ENCODE measurements at regions of chr11 and their contacts with region 1.

Region 1: DNA sequence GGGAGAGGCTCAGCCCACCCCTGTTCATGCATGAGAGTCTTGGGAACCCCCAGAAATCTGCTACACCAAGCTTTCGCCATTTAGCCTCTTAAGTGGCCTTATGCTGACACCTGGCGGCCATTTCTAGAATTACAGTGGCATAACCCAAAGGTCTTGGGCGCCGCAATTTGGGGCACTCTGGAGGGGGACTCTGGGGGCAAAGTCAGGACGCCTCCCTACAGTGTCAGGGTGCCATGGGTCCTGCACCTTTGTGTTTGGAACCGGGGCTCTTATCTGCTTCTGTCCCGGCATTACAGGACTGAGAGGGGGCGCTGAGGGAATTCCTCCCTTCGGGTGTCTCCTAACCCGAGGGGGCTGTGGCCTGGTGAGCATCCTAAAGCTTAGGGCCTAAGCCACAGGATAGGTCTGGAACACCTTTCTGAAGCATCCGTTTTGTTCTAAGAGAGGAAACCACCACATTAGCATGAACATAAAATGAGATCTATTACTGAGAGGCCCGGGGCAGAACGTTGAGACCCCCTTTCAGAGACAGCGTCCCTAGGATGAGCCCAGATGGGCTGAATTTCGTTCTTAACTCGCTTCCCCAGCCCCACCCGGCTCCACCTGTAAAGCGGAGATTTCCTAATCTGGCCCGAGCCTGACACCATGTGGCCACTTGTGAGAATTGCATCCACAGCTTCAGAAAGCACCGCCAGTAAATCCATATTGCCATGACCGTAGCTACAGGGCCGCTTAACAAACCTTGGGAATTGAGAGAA is 9.3 kb downstream of the INS start:
- DNase-seq: peak; percentile 54 to 67
- H3K4me3 ChIP-seq: no peak overlapping the region
- H3K27ac ChIP-seq: no peak overlapping the region
- H3K4me1 ChIP-seq: no peaks in the 10 kb centered on the region
- H3K27me3 ChIP-seq: no peaks in the 10 kb centered on the region
- CTCF ChIP-seq: peak; percentile 81

Region 2: GRCh38 chr11:1548221-1549070 is 603.2 kb before region 1 on chr11:
- CTCF ChIA-PET with region 1: no interaction called
- POLR2A ChIA-PET with region 1: no interaction called
- intact Hi-C with region 1: no loop called
- DNase-seq: peak; percentile 68 to 74
- H3K4me3 ChIP-seq: peak overlapping the region; percentile 38; the same call in 1 of the 2 replicates
- H3K27ac ChIP-seq: no peak overlapping the region
- H3K4me1 ChIP-seq: no peaks in the 10 kb centered on the region; the same call in none of the 2 replicates
- H3K27me3 ChIP-seq: peaks cover 8% of the 10 kb centered on the region; the same call in 1 of the 2 replicates
- CTCF ChIP-seq: no peak

Region 3: GRCh38 chr11:1652771-1653540 is 498.7 kb before region 1 on chr11:
- CTCF ChIA-PET with region 1: interaction called, 21 read pairs
- POLR2A ChIA-PET with region 1: no interaction called
- intact Hi-C with region 1: loop called (anchors 1 kb)
- DNase-seq: peak in 1 of 2 experiments; percentile 61
- H3K4me3 ChIP-seq: no peak overlapping the region
- H3K27ac ChIP-seq: no peak overlapping the region
- H3K4me1 ChIP-seq: no peaks in the 10 kb centered on the region
- H3K27me3 ChIP-seq: peaks cover 39% of the 10 kb centered on the region
- CTCF ChIP-seq: peak; percentile 92

Region 4: DNA sequence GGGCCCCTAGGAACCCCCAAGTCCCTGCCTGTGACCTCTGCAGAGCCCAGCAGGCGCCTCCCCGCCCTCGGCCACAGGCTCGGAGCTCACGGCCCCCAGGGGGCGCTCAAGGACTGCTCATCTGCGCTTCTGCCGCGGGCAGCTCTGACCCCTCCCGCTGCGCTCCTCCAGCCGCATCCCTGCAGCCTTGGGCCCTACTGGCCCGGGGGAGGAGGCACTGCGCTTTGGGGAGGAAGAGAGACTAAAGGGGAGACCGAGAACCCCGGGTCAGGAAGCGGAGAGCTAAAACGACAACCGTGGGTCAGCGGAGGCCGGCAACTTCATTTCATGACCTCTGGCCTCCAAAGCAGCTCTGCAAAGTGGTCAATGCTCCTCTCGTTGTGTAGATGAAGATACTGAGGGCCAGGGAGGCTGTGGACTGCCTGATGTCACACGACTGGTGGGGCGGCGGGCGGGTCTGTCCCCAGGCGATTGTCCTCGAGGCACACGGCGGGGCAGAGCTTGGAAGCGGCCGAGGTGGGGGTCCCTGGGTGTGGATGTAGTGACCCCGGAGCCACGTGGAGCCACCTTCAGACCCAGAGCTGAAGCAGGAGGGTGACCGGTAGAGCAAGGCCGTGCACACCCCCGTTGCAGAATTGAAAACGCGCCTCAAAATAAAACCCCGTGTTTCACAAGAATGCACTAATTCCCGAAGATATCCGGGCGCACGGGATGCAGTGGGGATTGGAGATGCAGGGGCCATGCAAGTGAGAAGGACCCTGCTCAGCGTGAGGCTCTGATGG is 457.4 kb before region 1 on chr11:
- CTCF ChIA-PET with region 1: interaction called, 6 read pairs
- POLR2A ChIA-PET with region 1: no interaction called
- intact Hi-C with region 1: loop called (anchors 2 kb)
- DNase-seq: peak; percentile 45 to 75
- H3K4me3 ChIP-seq: no peak overlapping the region; the same call in 1 of the 2 replicates
- H3K27ac ChIP-seq: no peak overlapping the region
- H3K4me1 ChIP-seq: peaks cover 11% of the 10 kb centered on the region
- H3K27me3 ChIP-seq: peaks cover 7% of the 10 kb centered on the region; the same call in 1 of the 2 replicates
- CTCF ChIP-seq: peak; percentile 85

Region 5: GRCh38 chr11:1882519-1883238 is 269.0 kb before region 1 on chr11:
- CTCF ChIA-PET with region 1: interaction called, 8 read pairs
- POLR2A ChIA-PET with region 1: interaction called, 3 read pairs
- intact Hi-C with region 1: loop called (anchors 2 kb)
- DNase-seq: peak in 1 of 2 experiments; percentile 71
- H3K4me3 ChIP-seq: no peak overlapping the region
- H3K27ac ChIP-seq: no peak overlapping the region
- H3K4me1 ChIP-seq: no peaks in the 10 kb centered on the region
- H3K27me3 ChIP-seq: peaks cover 19% of the 10 kb centered on the region; the same call in 1 of the 2 replicates
- CTCF ChIP-seq: peak; percentile 82

Region 6: DNA sequence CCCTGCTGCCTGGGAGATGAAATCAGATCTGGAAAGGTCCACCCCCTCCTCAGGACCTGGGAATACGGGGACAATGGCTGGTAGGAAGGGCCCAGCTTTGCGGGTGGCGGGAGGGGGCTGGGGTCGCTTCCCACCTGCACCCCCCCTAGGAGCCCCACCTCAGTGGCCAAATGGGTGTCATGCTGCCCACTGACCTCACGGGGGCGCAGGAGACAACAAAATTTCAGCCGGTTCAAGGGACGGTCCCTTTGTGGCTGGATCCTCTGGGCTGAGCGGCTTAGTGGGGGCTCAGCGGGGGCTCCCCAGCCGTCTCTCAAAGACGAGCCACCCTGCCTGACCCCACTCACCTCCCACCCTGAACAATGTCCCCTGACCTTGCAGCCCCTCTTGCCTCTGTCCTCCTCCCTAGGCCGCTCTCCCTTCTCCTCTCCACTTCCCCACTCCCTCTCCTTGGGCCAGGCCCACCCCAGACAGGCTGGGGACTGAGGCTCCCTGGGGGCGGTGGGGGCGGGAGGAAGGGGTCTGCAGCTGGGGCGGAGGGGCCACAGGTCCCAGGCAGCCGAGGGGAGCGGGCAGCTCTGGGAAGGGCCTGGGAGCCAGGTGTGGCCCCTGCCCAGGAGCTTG is 114.7 kb before region 1 on chr11:
- CTCF ChIA-PET with region 1: interaction called, 26 read pairs
- POLR2A ChIA-PET with region 1: no interaction called
- intact Hi-C with region 1: no loop called
- DNase-seq: no peak
- H3K4me3 ChIP-seq: no peak overlapping the region
- H3K27ac ChIP-seq: no peak overlapping the region
- H3K4me1 ChIP-seq: no peaks in the 10 kb centered on the region
- H3K27me3 ChIP-seq: no peaks in the 10 kb centered on the region
- CTCF ChIP-seq: no peak

Region 7: DNA sequence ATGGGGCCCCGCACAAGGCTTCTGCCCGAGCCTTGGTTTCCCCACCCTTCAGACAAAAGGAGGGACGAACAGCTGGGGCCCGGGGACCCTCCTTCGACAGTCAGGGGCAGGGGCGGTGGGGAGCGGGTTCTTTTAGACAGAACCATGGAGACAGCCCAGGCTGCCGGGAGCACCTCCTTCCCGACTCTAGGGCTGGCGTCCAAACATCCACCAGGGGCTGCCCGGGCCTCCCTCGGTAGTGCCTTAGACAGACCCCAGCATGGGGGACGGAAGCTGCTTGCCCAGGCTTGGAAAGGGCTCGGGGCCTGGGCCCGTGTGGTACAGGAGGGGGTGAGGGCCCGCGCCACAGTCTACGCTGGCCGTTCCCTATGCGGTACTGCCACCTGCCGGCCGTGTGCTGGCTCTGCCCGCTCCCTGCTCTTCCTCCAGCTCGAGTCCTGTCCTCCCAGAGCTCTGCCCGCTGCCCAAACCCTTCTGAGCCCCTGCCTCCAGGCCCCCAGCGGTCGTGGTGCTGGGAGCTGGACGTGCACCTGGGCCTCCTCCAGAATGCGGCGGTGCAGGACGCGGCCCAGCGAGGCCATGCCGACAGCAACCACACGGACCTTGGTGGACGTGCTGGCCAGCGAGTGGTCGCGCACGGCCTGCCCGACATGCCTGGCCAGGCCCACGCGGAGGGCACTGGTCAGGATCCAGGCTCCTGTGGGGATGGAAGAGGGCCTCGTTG is 269.0 kb after region 1 on chr11:
- CTCF ChIA-PET with region 1: interaction called, 10 read pairs
- POLR2A ChIA-PET with region 1: no interaction called
- intact Hi-C with region 1: no loop called
- DNase-seq: peak; percentile 37 to 54
- H3K4me3 ChIP-seq: no peak overlapping the region
- H3K27ac ChIP-seq: no peak overlapping the region
- H3K4me1 ChIP-seq: no peaks in the 10 kb centered on the region
- H3K27me3 ChIP-seq: peaks cover 10% of the 10 kb centered on the region; the same call in 1 of the 2 replicates
- CTCF ChIP-seq: peak; percentile 77

Region 8: DNA sequence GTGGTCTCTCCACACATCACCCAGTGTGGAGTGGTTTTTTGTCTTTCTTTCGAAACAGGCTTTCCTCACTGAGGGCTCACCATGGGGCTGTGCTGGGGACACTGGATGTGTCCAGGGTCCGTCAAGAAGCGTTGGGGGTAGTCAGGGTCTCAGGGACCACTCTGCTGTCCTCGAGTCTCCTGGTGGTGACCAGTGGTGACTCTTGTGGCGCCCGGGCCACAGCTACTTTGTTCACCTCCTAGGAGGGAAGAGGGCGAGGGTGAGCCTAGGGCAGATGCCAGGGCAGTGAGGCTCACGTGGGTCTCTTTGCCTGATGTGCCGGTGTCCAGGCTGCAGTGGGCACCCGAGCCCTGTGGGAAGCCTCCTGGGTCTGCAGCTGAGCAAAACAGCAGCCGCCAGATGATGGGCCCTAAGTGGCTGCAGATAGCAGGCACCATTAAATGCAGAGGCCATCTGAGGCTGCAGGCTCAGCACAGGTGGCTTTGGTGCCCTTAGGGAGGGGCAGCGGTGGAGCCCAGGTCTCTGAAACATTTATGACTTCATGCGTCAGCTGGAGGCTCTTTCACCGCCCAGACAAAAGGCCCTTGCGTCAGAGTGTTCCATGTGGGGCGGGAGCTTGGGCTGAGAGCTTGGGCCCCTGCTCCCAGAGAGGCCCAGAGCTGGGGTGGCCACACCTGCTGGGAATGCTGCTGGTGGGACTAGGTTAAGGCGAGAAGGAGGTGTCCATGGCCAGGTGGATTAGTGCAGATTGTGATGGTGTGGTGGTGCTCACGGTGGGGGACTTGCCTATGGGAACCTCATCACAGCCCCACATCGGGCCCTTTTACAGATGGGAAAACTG is 322.6 kb after region 1 on chr11:
- CTCF ChIA-PET with region 1: no interaction called
- POLR2A ChIA-PET with region 1: no interaction called
- intact Hi-C with region 1: no loop called
- DNase-seq: no peak
- H3K4me3 ChIP-seq: no peak overlapping the region
- H3K27ac ChIP-seq: no peak overlapping the region
- H3K4me1 ChIP-seq: no peaks in the 10 kb centered on the region
- H3K27me3 ChIP-seq: peaks cover 6% of the 10 kb centered on the region; the same call in 1 of the 2 replicates
- CTCF ChIP-seq: no peak

Measured in PC-9 (cell line).